ENCODE measurements at regions of chr3 and their contacts with region 1.

Region 1: GRCh38 chr3:72205297-72205826 is 420.4 kb upstream of the PROK2 start:
- DNase-seq: no peak
- H3K4me3 ChIP-seq: no peak overlapping the region
- H3K4me3 Mint-ChIP-seq: no peak overlapping the region
- H3K27ac ChIP-seq: no peak overlapping the region
- H3K27ac Mint-ChIP-seq: no peak overlapping the region
- H3K4me1 ChIP-seq: no peaks in the 10 kb centered on the region
- H3K4me1 Mint-ChIP-seq: peaks cover 2% of the 10 kb centered on the region
- H3K27me3 ChIP-seq: no peaks in the 10 kb centered on the region
- H3K27me3 Mint-ChIP-seq: peaks cover 0 to 9% (median 3%) of the 10 kb centered on the region in 3 donors
- CTCF ChIP-seq: no peak

Region 2: GRCh38 chr3:72109327-72110259 is 95.8 kb before region 1 on chr3:
- intact Hi-C with region 1: loop called in 1 of 2 experiments (anchors 10 kb)
- DNase-seq: peak; percentile 36 to 46 (median 38)
- H3K4me3 ChIP-seq: no peak overlapping the region
- H3K4me3 Mint-ChIP-seq: no peak overlapping the region
- H3K27ac ChIP-seq: no peak overlapping the region
- H3K27ac Mint-ChIP-seq: peak overlapping the region in 4 of 7 donors; percentile 15 to 58 (median 40)
- H3K4me1 ChIP-seq: peaks cover 0 to 5% of the 10 kb centered on the region in 2 donors
- H3K4me1 Mint-ChIP-seq: peaks cover 7% of the 10 kb centered on the region
- H3K27me3 ChIP-seq: no peaks in the 10 kb centered on the region
- H3K27me3 Mint-ChIP-seq: peaks cover 0 to 12% (median 3%) of the 10 kb centered on the region in 3 donors
- CTCF ChIP-seq: no peak

Measured in CD14-positive monocyte (primary cell).